Breast epithelium (tissue), 4 donors: ENCODE measurements at regions of chr21 and their contacts with region 1.

Region 1: GRCh38 chr21:15486460-15487195 is 243.2 kb upstream of the USP25 start:
- DNase-seq: no peak
- H3K4me3 ChIP-seq: no peak overlapping the region
- H3K27ac ChIP-seq: no peak overlapping the region
- H3K4me1 ChIP-seq: no peaks in the 10 kb centered on the region
- H3K27me3 ChIP-seq: no peaks in the 10 kb centered on the region
- CTCF ChIP-seq: no peak
- POLR2A ChIP-seq: no peak

Region 2: GRCh38 chr21:15379776-15380175 is 106.9 kb before region 1 on chr21:
- intact Hi-C with region 1: loop called (anchors 5 kb)
- DNase-seq: no peak
- H3K4me3 ChIP-seq: no peak overlapping the region
- H3K27ac ChIP-seq: no peak overlapping the region
- H3K4me1 ChIP-seq: no peaks in the 10 kb centered on the region
- H3K27me3 ChIP-seq: no peaks in the 10 kb centered on the region
- CTCF ChIP-seq: no peak
- POLR2A ChIP-seq: no peak